Activated CD4-positive, alpha-beta T cell treated with anti-CD3 and anti-CD28 coated beads, Interleukin-2, amount 10 ng/mL, durations not matched to agents 24 days and 14 days (primary cell): ENCODE measurements at regions of chr14 and their contacts with region 1.

Region 1: GRCh38 chr14:106436310-106436905 is 910.0 kb downstream of the TMEM121 start:
- DNase-seq: peak; percentile 86
- H3K4me3 Mint-ChIP-seq: no peak overlapping the region
- H3K27ac Mint-ChIP-seq: no peak overlapping the region
- H3K4me1 Mint-ChIP-seq: no peaks in the 10 kb centered on the region
- H3K27me3 Mint-ChIP-seq: peaks cover 40% of the 10 kb centered on the region

Region 2: GRCh38 chr14:106518054-106518943 is 81.9 kb after region 1 on chr14:
- intact Hi-C with region 1: loop called (anchors 2 kb)
- DNase-seq: peak; percentile 95
- H3K4me3 Mint-ChIP-seq: no peak overlapping the region
- H3K27ac Mint-ChIP-seq: no peak overlapping the region
- H3K4me1 Mint-ChIP-seq: peaks cover 9% of the 10 kb centered on the region
- H3K27me3 Mint-ChIP-seq: peaks cover 55% of the 10 kb centered on the region